Activated B cell treated with CpG ODN at 0.5 μM for 24 hours (primary cell): ENCODE measurements at regions of chr1 and their contacts with region 1.

Region 1: GRCh38 chr1:178542560-178543356 is 29.8 kb downstream of the TEX35 start:
- DNase-seq: peak; percentile 100
- ATAC-seq: peak; percentile 82
- H3K4me3 Mint-ChIP-seq: peak overlapping the region; percentile 97
- H3K27ac Mint-ChIP-seq: peak overlapping the region; percentile 96
- H3K4me1 Mint-ChIP-seq: peaks cover 47% of the 10 kb centered on the region
- H3K27me3 Mint-ChIP-seq: no peaks in the 10 kb centered on the region
- CTCF ChIP-seq: peak; percentile 85

Region 2: GRCh38 chr1:178575611-178576331 is 33.0 kb after region 1 on chr1:
- CTCF ChIA-PET with region 1: interaction called, 24 read pairs
- POLR2A ChIA-PET with region 1: interaction called, 74 read pairs
- intact Hi-C with region 1: loop called (anchors 1 kb)
- DNase-seq: no peak
- ATAC-seq: peak; percentile 36
- H3K4me3 Mint-ChIP-seq: peak overlapping the region; percentile 65
- H3K27ac Mint-ChIP-seq: peak overlapping the region; percentile 98
- H3K4me1 Mint-ChIP-seq: peaks cover 83% of the 10 kb centered on the region
- H3K27me3 Mint-ChIP-seq: no peaks in the 10 kb centered on the region
- CTCF ChIP-seq: no peak

Region 3: GRCh38 chr1:178664278-178664677 is 121.5 kb after region 1 on chr1:
- CTCF ChIA-PET with region 1: interaction called, 16 read pairs
- POLR2A ChIA-PET with region 1: interaction called, 13 read pairs
- intact Hi-C with region 1: loop called (anchors 1 kb)
- DNase-seq: peak; percentile 28
- ATAC-seq: peak; percentile 83
- H3K4me3 Mint-ChIP-seq: peak overlapping the region; percentile 69
- H3K27ac Mint-ChIP-seq: peak overlapping the region; percentile 86
- H3K4me1 Mint-ChIP-seq: peaks cover 91% of the 10 kb centered on the region
- H3K27me3 Mint-ChIP-seq: no peaks in the 10 kb centered on the region
- CTCF ChIP-seq: no peak

Region 4: DNA sequence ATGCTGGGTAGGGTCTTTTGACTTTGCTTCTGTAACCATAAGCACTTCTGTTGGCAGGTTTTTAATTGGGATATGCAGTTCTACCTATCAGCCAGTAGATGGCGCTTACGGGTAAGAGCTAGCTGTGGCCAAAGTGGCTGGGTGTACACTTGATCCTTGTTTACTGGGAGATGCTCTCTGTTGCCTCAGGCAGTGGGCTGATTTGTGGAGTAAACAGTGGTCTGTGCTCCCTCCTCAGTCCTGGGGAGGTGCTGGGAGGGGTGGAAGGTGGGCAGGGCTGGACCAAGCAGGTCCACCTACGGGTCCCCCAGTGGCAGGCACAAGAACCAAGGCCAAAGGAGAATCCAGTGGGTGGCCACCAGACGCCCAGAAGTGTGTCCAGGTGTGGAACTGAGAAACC is 225.7 kb after region 1 on chr1:
- CTCF ChIA-PET with region 1: interaction called, 19 read pairs
- POLR2A ChIA-PET with region 1: interaction called, 3 read pairs
- intact Hi-C with region 1: loop called (anchors 1 kb)
- DNase-seq: no peak
- ATAC-seq: peak; percentile 58
- H3K4me3 Mint-ChIP-seq: peak overlapping the region; percentile 32
- H3K27ac Mint-ChIP-seq: peak overlapping the region; percentile 72
- H3K4me1 Mint-ChIP-seq: peaks cover 70% of the 10 kb centered on the region
- H3K27me3 Mint-ChIP-seq: no peaks in the 10 kb centered on the region
- CTCF ChIP-seq: peak; percentile 20

Region 5: DNA sequence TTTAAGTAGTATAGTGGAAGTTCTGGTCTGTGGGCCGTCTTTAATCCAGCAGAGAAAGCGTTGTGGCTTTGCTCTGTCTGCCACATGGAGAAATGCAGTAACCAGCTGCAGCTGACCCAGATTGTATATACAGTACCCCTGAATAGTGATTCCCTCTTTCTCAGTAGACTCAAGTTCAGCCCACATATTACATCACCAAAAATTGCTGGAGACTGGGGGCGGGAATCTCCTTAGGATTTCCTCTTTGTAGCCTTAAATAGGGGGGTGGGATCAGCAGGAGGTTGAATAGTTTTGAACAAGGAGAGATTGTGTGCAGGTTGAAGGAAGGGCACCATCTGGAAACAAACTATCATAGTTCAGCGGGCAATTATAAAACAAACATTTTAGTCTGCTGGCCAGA is 328.2 kb after region 1 on chr1 and contains the start of gene ANGPTL1:
- CTCF ChIA-PET with region 1: interaction called, 6 read pairs
- POLR2A ChIA-PET with region 1: interaction called, 3 read pairs
- intact Hi-C with region 1: loop called (anchors 2 kb)
- DNase-seq: no peak
- ATAC-seq: no peak
- H3K4me3 Mint-ChIP-seq: no peak within 1 kb of the TSS
- H3K27ac Mint-ChIP-seq: peak within 1 kb of the TSS; percentile 77
- H3K4me1 Mint-ChIP-seq: peaks cover 39% of the 10 kb centered on the region
- H3K27me3 Mint-ChIP-seq: no peaks in the 10 kb centered on the region
- CTCF ChIP-seq: no peak
- total RNA-seq, gene ANGPTL1: not detected in 2 replicates

Region 6: DNA sequence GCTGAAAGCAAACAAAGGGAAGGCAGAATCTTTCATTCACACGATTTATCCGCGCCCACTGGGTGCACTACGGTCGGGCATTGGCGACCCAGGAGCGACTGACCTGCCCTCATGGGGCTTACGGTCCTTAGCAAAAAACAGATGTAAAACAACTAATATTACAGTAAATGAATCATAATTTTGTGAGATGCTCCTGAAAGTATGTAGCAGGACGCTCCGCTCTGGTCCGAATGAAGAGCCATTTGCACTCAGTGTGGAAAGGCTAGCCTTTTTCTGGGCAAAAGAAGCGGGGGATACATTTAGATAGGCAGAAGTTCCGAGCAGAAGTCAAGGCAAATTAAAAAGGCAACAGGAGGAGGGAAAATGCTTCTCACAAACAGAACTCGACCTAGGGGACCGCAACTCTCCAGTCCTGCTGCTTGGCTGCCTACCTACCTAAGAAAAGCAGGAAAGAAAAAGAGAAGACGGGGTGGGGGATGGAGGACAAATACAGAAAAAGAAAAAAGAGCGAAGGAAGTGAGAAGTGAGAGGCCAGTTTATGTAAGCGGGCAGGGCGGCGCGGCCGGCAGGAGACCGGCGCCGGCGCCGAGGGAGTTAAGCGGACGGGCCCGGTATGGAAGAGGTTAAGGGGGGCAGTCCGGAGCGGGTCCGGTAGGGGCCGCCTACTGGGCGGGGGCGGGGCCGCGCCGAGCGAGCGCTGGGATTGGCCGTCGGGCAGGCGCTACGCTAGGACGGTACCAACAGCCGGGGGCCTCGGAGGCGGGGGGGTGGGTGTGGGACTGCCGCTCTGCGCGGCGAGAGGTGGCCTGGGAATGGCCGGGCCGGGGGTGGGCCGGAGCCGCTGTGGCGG is 482.6 kb after region 1 on chr1 and contains the start of gene FAM20B:
- CTCF ChIA-PET with region 1: no interaction called
- POLR2A ChIA-PET with region 1: no interaction called
- intact Hi-C with region 1: loop called (anchors 1 kb)
- DNase-seq: peak; percentile 90
- ATAC-seq: peak; percentile 84
- H3K4me3 Mint-ChIP-seq: peak within 1 kb of the TSS; percentile 90
- H3K27ac Mint-ChIP-seq: peak within 1 kb of the TSS; percentile 90
- H3K4me1 Mint-ChIP-seq: peaks cover 43% of the 10 kb centered on the region
- H3K27me3 Mint-ChIP-seq: no peaks in the 10 kb centered on the region
- CTCF ChIP-seq: no peak
- total RNA-seq, gene FAM20B: 26.3 and 27.5 TPM in 2 replicates

Region 7: DNA sequence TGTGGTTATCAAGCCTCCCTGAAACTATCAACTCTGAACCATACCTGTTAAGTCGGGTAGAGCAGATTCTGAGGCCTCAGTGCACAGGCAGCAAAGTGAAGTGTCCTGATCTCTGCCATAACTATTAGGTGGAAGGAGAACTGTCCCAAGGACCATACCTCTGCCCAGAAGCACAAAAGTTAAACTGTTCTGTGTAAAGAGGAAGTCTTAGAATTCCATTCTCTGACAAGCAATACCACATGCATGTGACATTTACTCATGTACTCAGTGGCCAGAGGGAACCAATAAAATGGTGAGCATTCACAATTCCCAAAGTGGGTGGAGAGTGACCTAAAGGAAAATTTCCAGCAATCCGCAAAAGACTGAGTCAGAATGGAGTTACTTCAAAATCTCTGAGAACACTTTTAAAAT is 600.1 kb after region 1 on chr1:
- CTCF ChIA-PET with region 1: no interaction called
- POLR2A ChIA-PET with region 1: no interaction called
- intact Hi-C with region 1: no loop called
- DNase-seq: no peak
- ATAC-seq: peak; percentile 34
- H3K4me3 Mint-ChIP-seq: no peak overlapping the region
- H3K27ac Mint-ChIP-seq: peak overlapping the region; percentile 53
- H3K4me1 Mint-ChIP-seq: peaks cover 20% of the 10 kb centered on the region
- H3K27me3 Mint-ChIP-seq: no peaks in the 10 kb centered on the region
- CTCF ChIP-seq: no peak